ENCODE measurements at regions of chr1 and their contacts with region 1.

Region 1: GRCh38 chr1:85638412-85638811 is 57.9 kb downstream of the CCN1 start:
- DNase-seq: no peak
- ATAC-seq: no peak
- H3K4me3 ChIP-seq: no peak overlapping the region
- H3K4me3 Mint-ChIP-seq: no peak overlapping the region
- H3K27ac ChIP-seq: no peak overlapping the region
- H3K27ac Mint-ChIP-seq: no peak overlapping the region
- H3K4me1 ChIP-seq: no peaks in the 10 kb centered on the region
- H3K4me1 Mint-ChIP-seq: no peaks in the 10 kb centered on the region
- H3K27me3 ChIP-seq: no peaks in the 10 kb centered on the region
- H3K27me3 Mint-ChIP-seq: no peaks in the 10 kb centered on the region
- CTCF ChIP-seq: no peak

Region 2: DNA sequence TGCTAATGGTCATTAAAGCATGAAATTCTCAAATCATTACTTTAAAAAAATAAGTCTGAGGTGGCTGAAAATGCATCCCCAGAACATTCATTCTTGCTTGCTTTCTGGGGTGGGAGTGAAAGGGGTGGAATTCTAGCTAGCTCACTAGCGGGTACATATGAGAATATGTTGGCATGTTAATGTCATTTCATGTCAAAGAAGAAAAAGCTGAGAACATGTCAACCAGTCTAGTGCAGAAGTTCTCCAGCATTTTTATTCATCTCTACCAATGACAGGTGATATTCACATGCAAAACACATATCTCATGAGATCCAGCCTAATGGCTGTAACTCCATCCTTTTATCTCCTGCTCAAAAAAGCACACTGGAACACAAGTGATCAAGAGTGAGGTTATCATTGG is 20.8 kb after region 1 on chr1:
- CTCF ChIA-PET with region 1: no interaction called
- POLR2A ChIA-PET with region 1: no interaction called
- intact Hi-C with region 1: loop called in 1 of 2 experiments (anchors 1 kb)
- DNase-seq: no peak
- ATAC-seq: no peak
- H3K4me3 ChIP-seq: no peak overlapping the region
- H3K4me3 Mint-ChIP-seq: no peak overlapping the region
- H3K27ac ChIP-seq: no peak overlapping the region
- H3K27ac Mint-ChIP-seq: no peak overlapping the region
- H3K4me1 ChIP-seq: no peaks in the 10 kb centered on the region
- H3K4me1 Mint-ChIP-seq: no peaks in the 10 kb centered on the region
- H3K27me3 ChIP-seq: no peaks in the 10 kb centered on the region
- H3K27me3 Mint-ChIP-seq: no peaks in the 10 kb centered on the region
- CTCF ChIP-seq: no peak

Region 3: GRCh38 chr1:85957760-85958159 is 319.3 kb after region 1 on chr1:
- CTCF ChIA-PET with region 1: no interaction called
- POLR2A ChIA-PET with region 1: no interaction called
- intact Hi-C with region 1: no loop called
- DNase-seq: no peak
- ATAC-seq: no peak
- H3K4me3 ChIP-seq: no peak overlapping the region
- H3K4me3 Mint-ChIP-seq: no peak overlapping the region
- H3K27ac ChIP-seq: no peak overlapping the region
- H3K27ac Mint-ChIP-seq: no peak overlapping the region
- H3K4me1 ChIP-seq: no peaks in the 10 kb centered on the region
- H3K4me1 Mint-ChIP-seq: no peaks in the 10 kb centered on the region
- H3K27me3 ChIP-seq: no peaks in the 10 kb centered on the region
- H3K27me3 Mint-ChIP-seq: no peaks in the 10 kb centered on the region
- CTCF ChIP-seq: no peak